B cell (primary cell): ENCODE measurements at regions of chr2 and their contacts with region 1.

Region 1: GRCh38 chr2:190970873-190971506 is 43.0 kb downstream of the STAT1 start:
- DNase-seq: no peak
- ATAC-seq: no peak
- H3K4me3 ChIP-seq: no peak overlapping the region
- H3K4me3 Mint-ChIP-seq: no peak overlapping the region
- H3K27ac ChIP-seq: peak overlapping the region in 1 of 2 donors; percentile 49
- H3K27ac Mint-ChIP-seq: peak overlapping the region; percentile 62
- H3K4me1 ChIP-seq: no peaks in the 10 kb centered on the region
- H3K4me1 Mint-ChIP-seq: no peaks in the 10 kb centered on the region
- H3K27me3 ChIP-seq: no peaks in the 10 kb centered on the region
- H3K27me3 Mint-ChIP-seq: no peaks in the 10 kb centered on the region
- CTCF ChIP-seq: no peak

Region 2: DNA sequence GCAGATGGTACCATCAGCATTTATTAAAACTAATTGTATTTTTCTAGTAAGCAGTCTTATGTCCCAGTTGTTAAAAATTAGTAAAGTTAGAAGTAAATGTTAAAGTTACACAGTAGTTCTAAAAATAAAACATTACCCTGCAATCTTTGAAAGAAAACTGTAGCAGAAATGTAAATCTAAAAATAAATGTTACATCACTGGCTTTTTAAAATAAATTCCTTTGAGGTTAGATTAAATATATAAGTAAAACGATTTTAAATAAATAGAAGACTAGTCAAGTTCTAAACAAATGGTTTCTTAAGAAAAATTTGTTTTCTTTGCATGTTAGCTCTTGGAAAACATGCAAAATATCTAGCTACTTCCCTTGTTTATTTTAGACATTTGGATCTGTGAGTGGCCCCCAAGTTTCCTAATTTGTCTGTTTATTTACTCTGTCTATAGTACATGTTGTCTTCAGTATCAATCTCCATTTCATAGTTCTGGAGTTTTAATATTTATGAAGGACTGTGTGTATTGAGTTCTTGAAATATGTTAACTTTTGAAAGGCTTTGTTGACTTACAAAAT is 32.1 kb before region 1 on chr2:
- CTCF ChIA-PET with region 1: no interaction called
- POLR2A ChIA-PET with region 1: no interaction called
- intact Hi-C with region 1: loop called (anchors 5 kb)
- DNase-seq: no peak
- ATAC-seq: no peak
- H3K4me3 ChIP-seq: no peak overlapping the region
- H3K4me3 Mint-ChIP-seq: no peak overlapping the region
- H3K27ac ChIP-seq: peak overlapping the region in 1 of 2 donors; percentile 48
- H3K27ac Mint-ChIP-seq: no peak overlapping the region
- H3K4me1 ChIP-seq: no peaks in the 10 kb centered on the region
- H3K4me1 Mint-ChIP-seq: peaks cover 5% of the 10 kb centered on the region
- H3K27me3 ChIP-seq: no peaks in the 10 kb centered on the region
- H3K27me3 Mint-ChIP-seq: no peaks in the 10 kb centered on the region
- CTCF ChIP-seq: no peak

Region 3: GRCh38 chr2:191070276-191070675 is 99.3 kb after region 1 on chr2:
- CTCF ChIA-PET with region 1: no interaction called
- POLR2A ChIA-PET with region 1: no interaction called
- intact Hi-C with region 1: no loop called
- DNase-seq: no peak
- ATAC-seq: no peak
- H3K4me3 ChIP-seq: no peak overlapping the region
- H3K4me3 Mint-ChIP-seq: no peak overlapping the region
- H3K27ac ChIP-seq: no peak overlapping the region
- H3K27ac Mint-ChIP-seq: no peak overlapping the region
- H3K4me1 ChIP-seq: no peaks in the 10 kb centered on the region
- H3K4me1 Mint-ChIP-seq: peaks cover 3% of the 10 kb centered on the region
- H3K27me3 ChIP-seq: no peaks in the 10 kb centered on the region
- H3K27me3 Mint-ChIP-seq: peaks cover 6% of the 10 kb centered on the region
- CTCF ChIP-seq: no peak